Naive thymus-derived CD4-positive, alpha-beta T cell (primary cell): ENCODE measurements at regions of chrX and their contacts with region 1.

Region 1: DNA sequence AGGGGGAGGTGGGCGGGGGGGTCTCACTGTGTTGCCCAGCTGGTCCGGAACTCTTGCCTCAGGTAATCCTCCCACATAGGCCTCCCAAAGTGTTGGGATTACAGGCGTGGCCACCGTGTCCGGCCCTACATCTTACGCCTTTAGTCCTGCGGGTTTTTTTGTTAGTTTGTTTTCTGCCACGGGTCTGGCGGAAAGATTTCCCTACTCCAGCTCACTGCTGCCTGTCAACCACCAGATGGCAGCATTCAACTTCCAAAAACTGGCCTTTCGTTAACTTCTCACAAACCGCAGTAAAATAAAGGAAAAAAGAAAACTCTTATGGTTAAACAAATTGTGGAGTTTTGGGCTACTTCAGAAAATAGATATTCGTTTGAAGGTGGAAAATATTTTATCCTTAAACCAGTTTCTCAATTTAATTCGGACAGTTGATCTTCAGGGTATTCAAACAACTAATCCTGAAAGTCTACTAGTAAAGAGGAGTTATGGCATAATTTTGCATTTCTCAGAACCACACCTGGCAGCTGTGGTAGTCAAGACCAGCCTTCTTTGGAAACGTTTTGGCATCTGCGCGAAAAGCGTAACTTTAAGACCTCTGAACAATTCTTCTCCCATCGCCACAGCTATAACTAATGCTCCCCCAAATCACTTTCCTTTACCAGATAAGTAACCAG is 41.1 kb downstream of the LUZP4 start:
- DNase-seq: peak in 6 of 9 donors; percentile 1 to 49 (median 34)
- ATAC-seq: no peak
- H3K4me3 ChIP-seq: no peak overlapping the region
- H3K4me3 Mint-ChIP-seq: peak overlapping the region in 1 of 10 donors; percentile 47
- H3K27ac ChIP-seq: no peak overlapping the region
- H3K27ac Mint-ChIP-seq: no peak overlapping the region
- H3K4me1 ChIP-seq: no peaks in the 10 kb centered on the region
- H3K4me1 Mint-ChIP-seq: peaks cover 0 to 5% (median 0%) of the 10 kb centered on the region in 7 donors
- H3K27me3 ChIP-seq: no peaks in the 10 kb centered on the region
- H3K27me3 Mint-ChIP-seq: peaks cover 0 to 5% (median 0%) of the 10 kb centered on the region in 5 donors

Region 2: DNA sequence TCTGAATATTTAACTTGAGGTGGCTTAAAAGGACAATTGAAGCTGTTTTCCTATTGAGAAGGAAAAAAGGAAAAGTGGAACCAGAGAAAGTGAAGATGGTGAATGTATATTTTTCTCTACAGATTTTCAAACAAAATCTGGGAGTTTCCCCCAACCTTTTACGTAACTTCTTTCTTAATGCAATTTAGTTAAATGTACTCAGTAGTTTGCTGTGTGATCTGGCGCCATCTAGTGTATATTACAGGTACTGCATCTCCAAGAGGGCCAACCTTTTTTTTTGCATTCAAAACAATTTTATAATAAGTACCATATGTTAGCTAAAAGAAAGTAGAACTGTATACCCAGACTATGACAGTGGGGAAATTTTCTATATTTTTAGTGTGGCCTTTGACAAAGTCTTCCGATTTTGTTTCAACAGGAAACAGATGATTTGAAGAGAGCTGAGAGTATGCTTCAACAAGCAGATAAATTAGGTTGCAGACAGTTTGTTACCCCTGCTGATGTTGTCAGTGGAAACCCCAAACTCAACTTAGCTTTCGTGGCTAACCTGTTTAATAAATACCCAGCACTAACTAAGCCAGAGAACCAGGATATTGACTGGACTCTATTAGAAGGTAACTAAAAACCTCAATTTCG is 312.4 kb after region 1 on chrX:
- CTCF ChIA-PET with region 1: no interaction called
- POLR2A ChIA-PET with region 1: no interaction called
- intact Hi-C with region 1: loop called (anchors 1 kb)
- DNase-seq: peak in 8 of 9 donors; percentile 8 to 51 (median 30)
- ATAC-seq: peak; percentile 60
- H3K4me3 ChIP-seq: no peak overlapping the region
- H3K4me3 Mint-ChIP-seq: no peak overlapping the region
- H3K27ac ChIP-seq: no peak overlapping the region
- H3K27ac Mint-ChIP-seq: no peak overlapping the region
- H3K4me1 ChIP-seq: no peaks in the 10 kb centered on the region
- H3K4me1 Mint-ChIP-seq: no peaks in the 10 kb centered on the region
- H3K27me3 ChIP-seq: no peaks in the 10 kb centered on the region
- H3K27me3 Mint-ChIP-seq: peaks cover 0 to 4% (median 0%) of the 10 kb centered on the region in 5 donors

Region 3: DNA sequence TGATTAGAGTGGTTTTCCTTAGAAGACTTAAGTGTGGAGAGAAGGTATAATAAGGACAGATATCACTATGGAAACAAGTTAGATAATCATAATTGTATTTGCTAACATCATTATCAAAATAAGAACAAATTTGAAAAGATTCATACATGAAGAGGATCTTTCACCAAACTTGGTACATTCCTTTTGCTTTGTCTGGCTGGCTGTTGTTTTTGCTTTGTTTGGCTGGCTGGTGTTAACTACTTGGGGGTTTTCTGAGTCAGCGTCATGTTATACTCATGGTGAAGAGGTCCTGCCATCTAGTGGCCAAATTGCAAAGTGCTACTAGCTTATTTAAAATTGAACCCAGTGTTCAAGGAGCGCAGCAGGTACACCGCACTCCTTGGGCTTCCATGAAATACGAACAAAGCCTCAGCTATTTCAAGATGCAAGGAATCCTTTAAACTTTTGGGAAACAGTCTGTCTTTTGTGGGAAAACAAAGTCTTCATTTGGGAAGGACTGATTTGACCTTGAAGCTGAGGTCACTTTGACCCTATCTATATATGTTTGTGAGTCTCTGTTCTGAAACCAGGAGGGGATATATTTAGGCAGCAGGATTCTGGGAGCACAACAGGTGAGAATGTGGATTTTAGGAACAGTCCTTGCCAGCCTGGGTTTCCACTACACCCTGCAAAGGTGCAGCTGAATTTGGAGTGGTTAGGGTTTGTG is 360.0 kb after region 1 on chrX:
- CTCF ChIA-PET with region 1: no interaction called
- POLR2A ChIA-PET with region 1: no interaction called
- intact Hi-C with region 1: loop called in 1 of 2 experiments (anchors 2 kb)
- DNase-seq: peak in 7 of 9 donors; percentile 2 to 40 (median 23)
- ATAC-seq: peak; percentile 34
- H3K4me3 ChIP-seq: no peak overlapping the region
- H3K4me3 Mint-ChIP-seq: no peak overlapping the region
- H3K27ac ChIP-seq: no peak overlapping the region
- H3K27ac Mint-ChIP-seq: no peak overlapping the region
- H3K4me1 ChIP-seq: no peaks in the 10 kb centered on the region
- H3K4me1 Mint-ChIP-seq: no peaks in the 10 kb centered on the region
- H3K27me3 ChIP-seq: no peaks in the 10 kb centered on the region
- H3K27me3 Mint-ChIP-seq: peaks cover 0 to 4% (median 0%) of the 10 kb centered on the region in 5 donors